Activated B cell treated with CpG ODN at 0.5 μM for 24 hours (primary cell): ENCODE measurements at regions of chr16 and their contacts with region 1.

Region 1: DNA sequence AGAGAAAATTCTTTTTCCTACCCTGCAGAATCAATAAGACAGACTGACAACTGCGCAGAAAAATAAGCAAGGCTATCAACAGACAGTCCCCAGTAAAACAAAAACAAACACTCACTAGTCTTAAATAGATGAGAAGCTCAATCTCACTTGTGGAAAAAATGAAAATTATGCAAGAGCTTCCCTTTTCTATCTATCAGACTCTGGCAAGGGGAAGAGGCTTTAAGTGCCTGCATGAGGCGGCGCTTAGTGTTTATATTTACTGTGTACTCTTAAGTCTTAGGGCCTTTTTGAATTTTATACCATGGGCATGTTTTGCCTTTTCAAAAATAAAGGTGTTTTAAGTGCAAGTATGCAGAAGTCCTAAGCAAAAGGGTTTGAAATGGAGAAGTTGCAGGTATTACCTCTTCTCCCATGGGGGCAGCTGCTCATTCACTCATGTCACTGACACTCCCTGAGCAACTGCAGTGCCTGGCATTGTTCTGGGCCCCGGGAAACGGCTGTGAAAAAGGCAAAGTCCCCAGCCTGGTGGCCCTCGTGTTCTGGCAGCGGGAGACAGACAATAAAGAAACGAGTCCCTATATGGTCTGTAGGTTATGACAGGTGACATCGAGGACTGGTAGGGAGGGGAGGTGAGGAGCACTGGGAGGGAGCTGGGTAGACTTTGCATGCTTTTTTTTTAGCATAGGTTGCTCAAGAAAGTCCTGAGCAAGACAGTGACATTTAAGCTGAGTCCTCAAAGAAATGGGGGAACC is 35.2 kb downstream of the HSBP1 start:
- DNase-seq: peak; percentile 35
- ATAC-seq: peak; percentile 89
- H3K4me3 Mint-ChIP-seq: peak overlapping the region; percentile 76
- H3K27ac Mint-ChIP-seq: peak overlapping the region; percentile 78
- H3K4me1 Mint-ChIP-seq: peaks cover 48% of the 10 kb centered on the region
- H3K27me3 Mint-ChIP-seq: peaks cover 7% of the 10 kb centered on the region
- CTCF ChIP-seq: no peak

Region 2: DNA sequence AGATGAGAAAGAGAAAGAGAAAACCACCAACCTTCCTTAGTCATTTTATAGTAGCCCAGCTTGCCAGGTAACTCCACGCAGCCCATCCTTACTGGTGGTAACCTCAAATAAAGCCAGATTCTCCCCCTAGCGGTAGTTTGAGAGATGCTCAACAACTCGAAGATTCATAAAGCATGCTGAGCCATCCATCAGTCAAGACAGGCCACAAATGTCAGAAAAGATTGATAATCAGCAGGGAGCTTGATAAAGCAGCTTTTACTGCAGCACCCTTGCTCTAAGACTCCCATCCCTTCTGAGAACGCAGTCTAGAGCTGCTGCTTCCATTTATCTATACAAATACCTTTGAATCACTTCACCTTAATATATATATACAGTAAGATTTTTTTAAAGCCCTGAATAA is 486.7 kb before region 1 on chr16:
- CTCF ChIA-PET with region 1: no interaction called
- POLR2A ChIA-PET with region 1: no interaction called
- intact Hi-C with region 1: no loop called
- DNase-seq: no peak
- ATAC-seq: no peak
- H3K4me3 Mint-ChIP-seq: no peak overlapping the region
- H3K27ac Mint-ChIP-seq: no peak overlapping the region
- H3K4me1 Mint-ChIP-seq: peaks cover 3% of the 10 kb centered on the region
- H3K27me3 Mint-ChIP-seq: peaks cover 3% of the 10 kb centered on the region
- CTCF ChIP-seq: no peak

Region 3: GRCh38 chr16:83733301-83733700 is 109.6 kb before region 1 on chr16:
- CTCF ChIA-PET with region 1: no interaction called
- POLR2A ChIA-PET with region 1: no interaction called
- intact Hi-C with region 1: no loop called
- DNase-seq: no peak
- ATAC-seq: no peak
- H3K4me3 Mint-ChIP-seq: no peak overlapping the region
- H3K27ac Mint-ChIP-seq: no peak overlapping the region
- H3K4me1 Mint-ChIP-seq: no peaks in the 10 kb centered on the region
- H3K27me3 Mint-ChIP-seq: peaks cover 9% of the 10 kb centered on the region
- CTCF ChIP-seq: no peak

Region 4: DNA sequence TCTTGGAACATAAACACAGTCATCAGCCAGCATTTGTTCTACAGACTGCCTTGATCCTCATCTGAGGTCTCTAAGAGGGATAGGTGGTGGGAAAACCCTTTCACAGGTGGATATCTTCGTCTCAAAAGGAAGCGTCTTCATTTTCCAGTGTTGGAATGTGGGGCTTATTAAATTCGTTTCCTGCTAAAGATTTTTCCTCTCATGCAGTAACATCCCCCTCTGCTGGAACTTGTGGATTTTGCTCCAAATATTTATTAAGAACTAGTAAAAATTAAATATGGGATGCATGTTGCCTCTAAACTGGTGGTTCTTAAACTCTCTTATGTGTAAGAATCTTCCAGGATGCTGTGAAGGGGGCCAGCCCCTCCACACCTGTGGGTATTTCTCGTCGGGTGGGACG is 35.9 kb after region 1 on chr16:
- CTCF ChIA-PET with region 1: no interaction called
- POLR2A ChIA-PET with region 1: no interaction called
- intact Hi-C with region 1: loop called (anchors 5 kb)
- DNase-seq: no peak
- ATAC-seq: no peak
- H3K4me3 Mint-ChIP-seq: no peak overlapping the region
- H3K27ac Mint-ChIP-seq: no peak overlapping the region
- H3K4me1 Mint-ChIP-seq: no peaks in the 10 kb centered on the region
- H3K27me3 Mint-ChIP-seq: peaks cover 25% of the 10 kb centered on the region
- CTCF ChIP-seq: no peak

Region 5: GRCh38 chr16:83898463-83899271 is 55.7 kb after region 1 on chr16 and contains the start of gene MLYCD:
- CTCF ChIA-PET with region 1: no interaction called
- POLR2A ChIA-PET with region 1: interaction called, 8 read pairs
- intact Hi-C with region 1: loop called (anchors 2 kb)
- DNase-seq: peak; percentile 73
- ATAC-seq: peak; percentile 95
- H3K4me3 Mint-ChIP-seq: peak within 1 kb of the TSS; percentile 93
- H3K27ac Mint-ChIP-seq: peak within 1 kb of the TSS; percentile 75
- H3K4me1 Mint-ChIP-seq: peaks cover 28% of the 10 kb centered on the region
- H3K27me3 Mint-ChIP-seq: peaks cover 10% of the 10 kb centered on the region
- CTCF ChIP-seq: no peak
- total RNA-seq, gene MLYCD: 8.7 and 10.8 TPM in 2 replicates